ENCODE measurements at regions of chr1 and their contacts with region 1.

Region 1: DNA sequence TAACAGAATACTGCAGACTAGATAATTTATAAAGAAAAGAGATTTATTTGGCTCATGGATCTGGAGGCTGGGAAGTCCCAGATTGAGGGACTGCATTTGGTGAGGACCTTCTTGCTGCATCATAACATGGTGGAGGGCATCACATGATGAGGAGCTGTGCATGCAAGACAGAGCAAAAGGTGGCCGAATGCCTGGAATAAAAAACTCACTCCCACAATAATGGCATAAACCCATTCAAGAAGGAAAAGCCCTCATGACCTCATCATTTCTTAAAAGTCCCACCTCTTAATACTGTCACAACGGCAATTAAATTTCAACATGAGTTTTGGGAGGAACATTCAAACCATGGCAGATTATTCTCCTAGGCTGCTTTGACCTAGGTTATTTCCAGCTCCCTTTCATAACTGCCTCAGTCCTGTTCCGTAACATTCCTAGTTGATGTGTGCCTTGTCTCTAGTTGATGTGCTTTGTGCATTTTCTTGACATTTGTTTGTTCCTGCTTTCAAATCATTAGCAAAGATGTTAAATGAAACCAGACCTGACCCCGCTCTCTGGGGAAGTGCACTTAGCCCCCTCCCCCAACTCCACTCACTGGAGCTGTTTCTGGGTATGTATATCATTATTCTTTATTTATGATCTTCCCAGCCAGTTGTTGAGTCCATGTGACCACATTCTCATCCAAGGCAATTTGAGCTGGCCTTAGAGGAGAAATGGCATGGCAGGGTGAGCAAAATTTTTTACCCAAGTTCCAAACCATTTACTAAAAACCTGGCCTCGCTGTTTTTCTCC is 148.5 kb downstream of the GDAP2 start:
- DNase-seq: no peak
- ATAC-seq: no peak
- H3K4me3 ChIP-seq: no peak overlapping the region
- H3K27ac ChIP-seq: no peak overlapping the region
- H3K4me1 ChIP-seq: no peaks in the 10 kb centered on the region
- H3K27me3 ChIP-seq: no peaks in the 10 kb centered on the region
- CTCF ChIP-seq: no peak

Region 2: DNA sequence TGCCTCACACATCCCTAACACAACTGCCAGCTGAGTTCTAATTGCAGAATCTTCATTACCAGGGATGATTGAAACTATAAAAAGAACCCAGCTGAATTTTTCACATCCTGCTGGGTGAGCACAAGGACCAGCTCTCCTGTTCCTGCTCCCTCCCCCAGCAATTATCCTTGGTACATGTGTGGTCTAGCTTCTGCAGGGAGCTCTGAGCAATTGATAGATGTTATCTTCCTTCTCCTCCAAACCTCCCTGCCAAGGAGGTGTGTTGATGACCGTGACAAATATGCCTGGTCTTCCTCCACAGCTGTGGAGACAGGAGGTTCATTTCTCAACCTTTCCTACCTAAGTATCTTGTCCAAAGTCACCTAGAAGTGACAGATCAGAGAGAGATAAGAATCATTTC is 479.0 kb before region 1 on chr1:
- CTCF ChIA-PET with region 1: no interaction called
- POLR2A ChIA-PET with region 1: interaction called, 10 read pairs
- intact Hi-C with region 1: no loop called
- DNase-seq: no peak
- ATAC-seq: no peak
- H3K4me3 ChIP-seq: no peak overlapping the region
- H3K27ac ChIP-seq: no peak overlapping the region
- H3K4me1 ChIP-seq: no peaks in the 10 kb centered on the region
- H3K27me3 ChIP-seq: no peaks in the 10 kb centered on the region
- CTCF ChIP-seq: no peak

Region 3: GRCh38 chr1:118122249-118123004 is 341.5 kb after region 1 on chr1:
- CTCF ChIA-PET with region 1: no interaction called
- POLR2A ChIA-PET with region 1: no interaction called
- intact Hi-C with region 1: no loop called
- DNase-seq: peak; percentile 78
- ATAC-seq: no peak
- H3K4me3 ChIP-seq: no peak overlapping the region
- H3K27ac ChIP-seq: peak overlapping the region; percentile 34
- H3K4me1 ChIP-seq: peaks cover 38% of the 10 kb centered on the region
- H3K27me3 ChIP-seq: no peaks in the 10 kb centered on the region
- CTCF ChIP-seq: no peak

Measured in PC-3 (cell line).